HCT116 (cell line): ENCODE measurements at regions of chr19 and their contacts with region 1.

Region 1: GRCh38 chr19:40305403-40305802 is 20.3 kb upstream of the AKT2 start:
- DNase-seq: peak; percentile 77
- ATAC-seq: peak; percentile 84
- H3K4me3 ChIP-seq: no peak overlapping the region
- H3K27ac ChIP-seq: no peak overlapping the region
- H3K4me1 ChIP-seq: no peaks in the 10 kb centered on the region
- H3K27me3 ChIP-seq: no peaks in the 10 kb centered on the region
- CTCF ChIP-seq: peak; percentile 66 to 94 (median 82)
- POLR2A ChIP-seq: no peak
- RAD21 ChIP-seq: peak; percentile 93

Region 2: GRCh38 chr19:40128991-40129390 is 176.4 kb before region 1 on chr19:
- CTCF ChIA-PET with region 1: no interaction called
- POLR2A ChIA-PET with region 1: no interaction called
- RAD21 ChIA-PET with region 1: no interaction called
- intact Hi-C with region 1: no loop called
- DNase-seq: no peak
- ATAC-seq: no peak
- H3K4me3 ChIP-seq: no peak overlapping the region
- H3K27ac ChIP-seq: no peak overlapping the region
- H3K4me1 ChIP-seq: no peaks in the 10 kb centered on the region
- H3K27me3 ChIP-seq: 0 out of 2 replicates have a peak, but pooled peaks cover 5% of the 10 kb centered on the region
- CTCF ChIP-seq: no peak
- POLR2A ChIP-seq: no peak
- RAD21 ChIP-seq: no peak

Region 3: GRCh38 chr19:40139533-40140287 is 165.7 kb before region 1 on chr19:
- CTCF ChIA-PET with region 1: interaction called, 21 read pairs
- POLR2A ChIA-PET with region 1: interaction called, 4 read pairs
- RAD21 ChIA-PET with region 1: interaction called, 3 read pairs
- intact Hi-C with region 1: no loop called
- DNase-seq: peak; percentile 48
- ATAC-seq: peak; percentile 80
- H3K4me3 ChIP-seq: no peak overlapping the region
- H3K27ac ChIP-seq: no peak overlapping the region
- H3K4me1 ChIP-seq: no peaks in the 10 kb centered on the region
- H3K27me3 ChIP-seq: peaks cover 18% of the 10 kb centered on the region; the same call in 1 of the 2 replicates
- CTCF ChIP-seq: peak; percentile 60 to 91 (median 85)
- POLR2A ChIP-seq: no peak
- RAD21 ChIP-seq: peak; percentile 98

Region 4: DNA sequence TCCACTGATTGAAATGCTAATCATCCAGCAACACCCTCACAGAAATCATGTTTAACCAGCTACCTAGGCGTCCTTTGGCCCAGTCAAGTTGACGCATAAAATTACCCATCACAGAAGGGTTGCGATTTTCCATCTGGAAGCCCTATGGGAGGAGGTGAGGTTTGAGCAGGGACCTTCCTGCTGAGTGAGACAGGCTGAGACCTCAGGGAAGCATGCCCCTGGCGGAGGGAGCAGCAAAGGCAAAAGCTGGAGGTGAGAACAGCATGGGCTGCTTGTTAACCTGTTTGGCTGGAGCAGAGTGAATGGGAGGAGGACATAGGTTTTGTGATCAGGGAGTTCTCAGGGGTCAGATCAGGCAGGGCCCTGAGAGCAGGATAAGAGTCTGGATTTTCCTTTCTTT is 94.5 kb before region 1 on chr19:
- CTCF ChIA-PET with region 1: no interaction called
- POLR2A ChIA-PET with region 1: no interaction called
- RAD21 ChIA-PET with region 1: no interaction called
- intact Hi-C with region 1: no loop called
- DNase-seq: no peak
- ATAC-seq: no peak
- H3K4me3 ChIP-seq: no peak overlapping the region
- H3K27ac ChIP-seq: no peak overlapping the region
- H3K4me1 ChIP-seq: peaks cover 1 to 2% of the 10 kb centered on the region in 2 experiments; a peak in 3 of 4 replicates
- H3K27me3 ChIP-seq: no peaks in the 10 kb centered on the region
- CTCF ChIP-seq: no peak
- POLR2A ChIP-seq: no peak
- RAD21 ChIP-seq: no peak

Region 5: DNA sequence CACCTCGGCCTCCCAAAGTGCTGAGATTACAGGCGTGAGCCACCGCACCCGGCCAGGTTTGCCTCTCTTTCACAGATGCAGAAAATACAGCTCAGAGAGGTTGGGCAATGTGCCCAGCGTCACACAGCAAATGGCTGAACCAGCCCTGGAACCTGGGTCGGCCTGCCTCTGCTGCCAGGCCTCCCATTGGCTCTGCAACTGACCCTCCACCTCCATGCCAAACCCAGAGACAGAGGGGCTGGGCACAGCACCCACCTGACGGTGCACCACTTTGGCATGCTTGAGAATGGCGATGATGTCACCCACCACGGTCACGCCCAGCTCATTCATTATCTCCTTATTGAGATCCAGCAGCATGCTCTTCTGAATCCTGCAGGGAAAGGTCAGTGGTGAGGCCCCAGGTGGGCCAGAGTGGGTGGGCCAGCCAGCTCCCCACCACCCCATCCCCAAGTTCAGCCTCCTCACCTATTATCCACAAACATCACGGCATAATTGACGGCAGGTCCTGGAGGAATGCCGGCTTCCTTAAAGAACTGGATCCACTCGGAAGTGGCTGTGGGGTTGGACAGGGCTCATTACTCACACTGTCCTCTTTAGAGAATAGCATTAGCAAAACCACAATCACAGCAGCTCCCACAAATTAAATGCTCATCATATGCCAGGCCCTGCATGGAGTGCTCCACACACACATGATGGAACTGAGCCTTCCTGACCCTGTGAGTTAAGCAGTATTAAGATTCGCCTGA is 30.6 kb after region 1 on chr19:
- CTCF ChIA-PET with region 1: no interaction called
- POLR2A ChIA-PET with region 1: no interaction called
- RAD21 ChIA-PET with region 1: no interaction called
- intact Hi-C with region 1: no loop called
- DNase-seq: no peak
- ATAC-seq: no peak
- H3K4me3 ChIP-seq: no peak overlapping the region
- H3K27ac ChIP-seq: no peak overlapping the region
- H3K4me1 ChIP-seq: no peaks in the 10 kb centered on the region
- H3K27me3 ChIP-seq: no peaks in the 10 kb centered on the region
- CTCF ChIP-seq: no peak
- POLR2A ChIP-seq: no peak
- RAD21 ChIP-seq: no peak

Region 6: DNA sequence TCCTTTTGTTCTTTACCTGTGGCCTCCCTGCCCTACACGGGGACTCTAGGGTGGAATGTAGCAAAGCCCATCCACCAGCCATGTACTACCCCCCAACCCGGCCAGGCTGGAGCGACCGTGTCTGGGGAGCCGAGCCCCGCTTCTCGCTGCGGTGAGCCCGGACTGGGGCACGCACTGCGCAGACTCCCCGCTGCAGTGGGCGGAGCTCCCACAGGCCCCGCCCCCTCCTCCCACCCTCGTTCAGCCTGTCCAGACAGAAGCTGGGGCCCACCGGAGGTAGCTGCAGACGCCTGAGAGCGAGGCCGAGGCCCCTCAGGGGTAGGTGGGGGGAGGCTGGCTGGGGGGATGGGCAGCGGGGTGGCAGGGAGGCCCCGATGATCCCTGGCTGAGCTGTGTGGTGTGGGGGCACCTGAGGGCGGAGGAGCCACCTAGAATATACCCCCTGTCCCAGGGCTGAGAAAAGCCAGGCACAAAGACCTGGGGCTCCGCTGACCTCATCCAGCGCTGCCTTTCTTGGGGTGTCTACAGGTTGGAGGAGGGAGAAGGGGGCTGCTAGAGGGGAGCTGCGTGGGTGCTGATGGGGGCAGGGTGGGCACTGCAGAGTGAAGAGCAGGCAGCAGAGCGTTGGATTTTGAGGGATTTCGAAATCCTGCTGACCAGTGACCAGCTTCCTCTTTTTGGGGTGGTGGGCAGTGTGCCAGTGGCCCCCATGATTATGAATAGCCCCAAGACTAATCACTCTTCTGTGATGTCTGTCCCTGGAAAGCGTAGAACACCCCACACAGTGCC is 60.4 kb after region 1 on chr19:
- CTCF ChIA-PET with region 1: no interaction called
- POLR2A ChIA-PET with region 1: no interaction called
- RAD21 ChIA-PET with region 1: no interaction called
- intact Hi-C with region 1: no loop called
- DNase-seq: no peak
- ATAC-seq: peak; percentile 27
- H3K4me3 ChIP-seq: no peak overlapping the region
- H3K27ac ChIP-seq: no peak overlapping the region
- H3K4me1 ChIP-seq: no peaks in the 10 kb centered on the region
- H3K27me3 ChIP-seq: no peaks in the 10 kb centered on the region
- CTCF ChIP-seq: no peak
- POLR2A ChIP-seq: no peak
- RAD21 ChIP-seq: no peak

Region 7: GRCh38 chr19:40465557-40466150 is 160.3 kb after region 1 on chr19 and contains the start of gene BLVRB:
- CTCF ChIA-PET with region 1: interaction called, 13 read pairs
- POLR2A ChIA-PET with region 1: no interaction called
- RAD21 ChIA-PET with region 1: interaction called in 1 of 2 experiments, 3 read pairs
- intact Hi-C with region 1: no loop called
- DNase-seq: peak; percentile 98
- ATAC-seq: peak; percentile 88
- H3K4me3 ChIP-seq: peak within 1 kb of the TSS; percentile 93 to 95
- H3K27ac ChIP-seq: peak within 1 kb of the TSS; percentile 89
- H3K4me1 ChIP-seq: peaks cover 13 to 34% of the 10 kb centered on the region in 2 experiments
- H3K27me3 ChIP-seq: no peaks in the 10 kb centered on the region
- CTCF ChIP-seq: no peak
- POLR2A ChIP-seq: no peak
- RAD21 ChIP-seq: no peak
- total RNA-seq, gene BLVRB: 113 TPM

Region 8: DNA sequence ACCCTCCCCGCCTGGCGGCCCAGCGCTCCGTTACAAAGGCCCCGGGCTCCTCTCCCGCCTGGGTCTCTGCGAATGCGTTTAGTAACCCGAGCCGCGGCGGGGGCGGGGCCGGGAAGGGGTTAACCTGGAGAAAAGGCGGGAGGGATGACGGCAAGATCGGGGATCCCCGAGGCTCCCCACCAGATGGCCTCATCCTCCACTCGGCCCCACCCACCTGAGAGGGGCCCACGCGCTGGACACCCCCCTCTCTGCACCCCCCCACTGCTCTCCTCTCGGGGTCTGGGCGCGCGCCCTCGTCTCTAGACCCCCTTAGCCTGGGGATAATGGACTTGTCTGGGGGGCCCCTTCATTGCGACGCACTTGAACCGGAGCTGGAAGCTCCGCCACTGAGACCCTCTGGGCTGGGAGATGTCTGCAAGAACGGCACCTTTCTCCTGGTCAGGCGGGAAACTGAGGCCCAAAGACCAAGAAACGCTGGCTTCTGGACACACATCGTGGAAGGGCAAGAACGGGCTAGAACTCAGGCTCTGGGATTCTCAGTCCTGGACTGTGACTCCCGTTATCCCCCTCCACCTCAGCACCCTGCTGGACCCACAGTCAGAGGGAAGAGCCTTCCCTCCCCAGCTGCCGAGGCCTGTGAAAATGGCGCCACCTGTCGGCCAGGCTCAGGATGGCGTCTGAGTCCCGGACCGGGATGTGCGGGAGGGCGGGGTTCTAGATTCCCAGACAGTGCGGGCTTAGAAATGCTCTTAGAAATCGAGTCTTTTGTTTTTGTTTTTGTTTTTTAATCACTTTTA is 292.9 kb after region 1 on chr19:
- CTCF ChIA-PET with region 1: interaction called, 29 read pairs
- POLR2A ChIA-PET with region 1: no interaction called
- RAD21 ChIA-PET with region 1: no interaction called
- intact Hi-C with region 1: loop called (anchors 1 kb)
- DNase-seq: peak; percentile 86
- ATAC-seq: peak; percentile 57
- H3K4me3 ChIP-seq: peak overlapping the region; percentile 74 to 82
- H3K27ac ChIP-seq: peak overlapping the region; percentile 63
- H3K4me1 ChIP-seq: peaks cover 27 to 73% of the 10 kb centered on the region in 2 experiments
- H3K27me3 ChIP-seq: no peaks in the 10 kb centered on the region
- CTCF ChIP-seq: peak in 2 of 3 experiments; percentile 97; a peak in 4 of 6 replicates
- POLR2A ChIP-seq: peak; percentile 63
- RAD21 ChIP-seq: no peak

Region 9: GRCh38 chr19:40640744-40641143 is 335.3 kb after region 1 on chr19:
- CTCF ChIA-PET with region 1: interaction called, 16 read pairs
- POLR2A ChIA-PET with region 1: no interaction called
- RAD21 ChIA-PET with region 1: no interaction called
- intact Hi-C with region 1: no loop called
- DNase-seq: no peak
- ATAC-seq: no peak
- H3K4me3 ChIP-seq: no peak overlapping the region
- H3K27ac ChIP-seq: no peak overlapping the region
- H3K4me1 ChIP-seq: peaks cover 20 to 36% of the 10 kb centered on the region in 2 experiments
- H3K27me3 ChIP-seq: no peaks in the 10 kb centered on the region
- CTCF ChIP-seq: no peak
- POLR2A ChIP-seq: no peak
- RAD21 ChIP-seq: no peak